Activated CD8-positive, alpha-beta T cell treated with anti-CD3 and anti-CD28 coated beads for 36 hours (primary cell): ENCODE measurements at regions of chr6 and their contacts with region 1.

Region 1: DNA sequence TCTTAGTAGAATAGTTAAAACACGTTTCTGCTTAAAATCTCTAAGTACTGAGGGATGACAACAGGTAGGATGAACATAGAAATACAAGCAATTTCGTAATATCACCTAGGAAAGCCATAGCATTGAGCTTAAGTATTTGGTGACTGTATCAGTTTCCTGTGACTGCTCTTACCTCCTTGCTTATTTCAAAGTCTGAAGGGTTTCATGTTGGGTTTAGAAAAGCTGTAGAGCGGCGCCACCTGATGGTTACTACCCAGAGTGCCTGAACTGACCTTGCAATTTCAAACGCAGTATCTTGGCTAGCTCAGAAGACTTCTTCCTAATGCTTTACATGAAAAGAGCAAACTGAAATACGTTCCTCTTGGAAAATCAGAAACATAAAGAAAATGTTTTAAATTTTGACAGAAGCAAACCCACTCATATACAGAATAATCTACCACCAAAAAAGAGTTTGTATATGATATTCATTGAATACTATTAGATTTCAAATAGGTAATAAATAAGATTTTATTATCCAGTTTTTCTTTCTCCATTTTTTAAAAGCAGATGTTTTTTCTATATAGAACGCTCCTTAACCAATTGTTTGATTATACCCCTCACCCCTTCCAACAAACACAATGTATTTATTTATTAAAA is 82.3 kb upstream of the RIPOR2 start:
- DNase-seq: peak; percentile 94
- ATAC-seq: peak; percentile 80
- H3K4me3 Mint-ChIP-seq: peak overlapping the region; percentile 11
- H3K27ac Mint-ChIP-seq: peak overlapping the region; percentile 76
- H3K4me1 Mint-ChIP-seq: peaks cover 51% of the 10 kb centered on the region
- H3K27me3 Mint-ChIP-seq: no peaks in the 10 kb centered on the region
- CTCF ChIP-seq: peak; percentile 84

Region 2: DNA sequence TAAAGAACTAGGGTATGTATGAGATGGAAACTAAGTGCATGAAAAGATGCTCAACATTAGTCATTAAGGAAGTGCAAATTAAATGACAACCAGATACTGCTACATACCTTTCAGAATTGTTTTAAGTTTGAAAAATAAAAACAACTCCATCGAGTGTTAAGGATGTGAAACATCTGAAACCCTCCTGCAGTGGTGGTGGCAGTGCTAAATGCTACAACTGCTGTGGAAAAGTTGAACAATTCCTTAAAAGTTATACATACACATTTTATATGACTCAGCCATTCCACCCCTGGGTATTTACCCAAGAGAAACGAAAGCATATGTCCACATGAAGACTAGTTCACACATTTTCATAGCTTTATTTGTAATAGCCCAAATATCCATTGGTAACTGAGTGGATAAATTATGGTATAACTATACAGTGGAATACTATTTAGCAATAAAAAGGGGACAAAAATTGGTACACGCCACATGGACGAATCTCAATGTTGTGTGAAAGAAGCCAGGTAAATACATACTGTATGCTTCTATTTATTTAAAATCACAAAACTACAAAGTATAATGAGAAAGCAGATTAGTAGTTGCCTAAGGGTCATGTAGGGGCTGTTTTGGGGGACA is 229.9 kb before region 1 on chr6:
- CTCF ChIA-PET with region 1: interaction called, 10 read pairs
- POLR2A ChIA-PET with region 1: interaction called, 3 read pairs
- intact Hi-C with region 1: no loop called
- DNase-seq: peak; percentile 33
- ATAC-seq: peak; percentile 79
- H3K4me3 Mint-ChIP-seq: no peak overlapping the region
- H3K27ac Mint-ChIP-seq: peak overlapping the region; percentile 47
- H3K4me1 Mint-ChIP-seq: peaks cover 19% of the 10 kb centered on the region
- H3K27me3 Mint-ChIP-seq: no peaks in the 10 kb centered on the region
- CTCF ChIP-seq: no peak

Region 3: DNA sequence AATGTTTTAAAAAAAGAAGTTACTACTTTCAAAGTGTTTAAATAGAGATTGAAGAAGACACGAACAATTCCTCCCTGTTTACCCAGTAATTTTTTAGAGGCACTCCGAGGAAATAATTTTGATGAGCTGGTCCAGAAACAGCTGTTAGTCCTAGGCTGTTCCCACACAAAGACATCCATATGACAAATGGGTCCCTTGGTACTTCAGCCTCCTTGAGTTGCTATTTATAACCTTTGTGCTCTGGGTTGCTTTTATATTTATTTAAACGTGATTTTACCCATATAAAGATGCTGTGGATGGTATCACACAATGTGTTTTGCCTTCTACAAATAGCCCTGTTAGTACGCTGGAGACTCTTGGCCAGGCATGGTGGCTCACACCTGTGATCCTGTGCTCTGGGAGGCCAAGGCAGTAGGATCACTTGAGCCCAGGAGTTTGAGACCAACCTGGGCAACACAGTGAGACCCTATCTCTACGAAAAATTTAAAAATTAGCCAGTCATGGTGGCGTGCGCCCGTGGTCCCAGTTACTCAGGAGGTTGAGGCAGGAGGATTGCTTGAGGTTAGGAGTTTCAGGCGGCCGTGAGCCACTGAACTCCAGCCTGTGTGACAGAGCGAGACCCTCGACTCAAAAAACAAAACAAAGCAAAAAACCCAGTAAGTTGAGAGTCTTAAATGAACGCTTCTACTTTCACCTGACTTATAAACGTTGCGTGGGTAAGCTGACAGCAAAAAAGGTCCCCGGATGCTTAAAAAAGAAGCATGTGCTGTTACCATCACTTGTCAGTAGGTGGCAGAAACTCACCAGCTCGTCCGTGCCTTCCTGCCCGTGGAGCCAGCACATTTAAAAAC is 162.4 kb before region 1 on chr6:
- CTCF ChIA-PET with region 1: interaction called, 156 read pairs
- POLR2A ChIA-PET with region 1: interaction called, 4 read pairs
- intact Hi-C with region 1: loop called (anchors 2 kb)
- DNase-seq: peak; percentile 83
- ATAC-seq: peak; percentile 68
- H3K4me3 Mint-ChIP-seq: peak overlapping the region; percentile 22
- H3K27ac Mint-ChIP-seq: peak overlapping the region; percentile 87
- H3K4me1 Mint-ChIP-seq: peaks cover 61% of the 10 kb centered on the region
- H3K27me3 Mint-ChIP-seq: no peaks in the 10 kb centered on the region
- CTCF ChIP-seq: peak; percentile 88

Region 4: DNA sequence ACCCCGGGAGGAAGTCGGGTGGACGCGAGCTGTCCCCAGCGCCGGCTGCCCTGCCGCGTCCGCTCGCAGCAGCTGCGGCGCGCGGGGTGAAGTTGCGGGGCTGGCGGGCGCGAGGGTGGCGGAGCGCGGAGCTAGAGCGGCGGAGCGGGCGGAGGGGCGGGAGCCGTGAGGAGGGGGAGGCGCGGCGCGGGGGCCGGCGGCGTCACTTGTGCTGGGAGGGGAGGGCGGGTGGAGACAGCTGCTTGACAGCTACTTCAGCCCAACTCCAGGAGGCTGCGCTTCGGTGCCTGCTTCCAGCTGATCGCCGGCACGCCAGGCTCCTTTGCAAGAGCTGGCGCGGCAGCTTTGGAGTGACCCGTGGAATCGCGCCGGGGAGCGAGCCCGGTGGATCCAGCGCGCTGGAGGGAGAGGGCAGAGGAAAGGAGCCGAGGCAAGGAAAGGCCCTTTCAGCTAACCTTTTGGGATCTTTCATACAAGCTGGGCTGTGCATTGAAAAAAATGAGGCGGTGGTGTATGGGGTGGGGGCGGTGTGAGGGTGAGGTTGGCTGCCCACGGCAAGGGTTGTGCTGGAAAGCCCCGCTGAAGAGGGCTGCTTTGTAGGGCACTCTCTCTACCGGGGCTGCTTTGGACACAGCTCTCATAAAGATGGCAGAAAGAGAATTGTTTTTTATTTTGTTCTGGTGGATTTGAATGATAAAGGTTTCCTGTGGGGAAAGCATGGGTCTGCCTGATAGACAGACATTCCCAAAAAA is 106.9 kb before region 1 on chr6:
- CTCF ChIA-PET with region 1: interaction called, 43 read pairs
- POLR2A ChIA-PET with region 1: no interaction called
- intact Hi-C with region 1: no loop called
- DNase-seq: peak; percentile 64
- ATAC-seq: peak; percentile 18
- H3K4me3 Mint-ChIP-seq: peak overlapping the region; percentile 97
- H3K27ac Mint-ChIP-seq: peak overlapping the region; percentile 96
- H3K4me1 Mint-ChIP-seq: peaks cover 73% of the 10 kb centered on the region
- H3K27me3 Mint-ChIP-seq: no peaks in the 10 kb centered on the region
- CTCF ChIP-seq: no peak

Region 5: GRCh38 chr6:25042036-25042521 is 24.0 kb after region 1 on chr6:
- CTCF ChIA-PET with region 1: interaction called, 12 read pairs
- POLR2A ChIA-PET with region 1: no interaction called
- intact Hi-C with region 1: no loop called
- DNase-seq: peak; percentile 64
- ATAC-seq: peak; percentile 64
- H3K4me3 Mint-ChIP-seq: peak overlapping the region; percentile 83
- H3K27ac Mint-ChIP-seq: peak overlapping the region; percentile 92
- H3K4me1 Mint-ChIP-seq: peaks cover 52% of the 10 kb centered on the region
- H3K27me3 Mint-ChIP-seq: no peaks in the 10 kb centered on the region
- CTCF ChIP-seq: no peak

Region 6: DNA sequence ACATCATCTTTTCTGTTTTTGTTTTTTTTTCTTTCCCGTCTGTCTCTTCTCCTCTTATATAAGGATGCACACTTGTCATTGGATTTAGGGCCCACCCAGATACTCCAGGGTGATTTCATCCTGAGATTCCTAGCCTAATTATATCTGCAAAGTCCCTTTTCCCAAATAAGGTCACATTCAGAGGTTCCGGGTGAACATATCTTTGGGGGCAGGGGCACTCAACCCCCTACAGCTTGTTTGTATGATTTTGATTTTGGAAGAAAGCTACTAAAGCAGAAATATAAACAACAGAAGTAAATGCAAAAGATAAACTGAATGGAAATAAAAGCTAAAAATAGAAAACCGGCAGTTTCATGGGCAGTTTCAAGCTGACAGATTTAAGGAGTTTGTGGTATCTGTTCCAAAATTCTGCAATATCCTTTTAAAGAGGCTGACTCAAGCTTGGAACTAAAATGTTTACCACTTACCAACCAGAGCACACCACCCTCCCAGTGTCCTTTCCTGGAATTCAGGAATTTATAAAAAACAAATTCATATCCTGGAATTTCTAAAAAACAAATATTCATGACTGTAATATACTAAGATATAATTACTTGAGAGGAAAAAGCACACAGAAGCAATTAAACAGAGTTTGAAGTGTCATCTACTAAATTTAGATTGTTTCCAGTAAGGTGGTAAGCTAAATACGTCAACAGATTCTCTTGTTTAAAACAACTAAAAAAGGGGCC is 161.2 kb after region 1 on chr6:
- CTCF ChIA-PET with region 1: no interaction called
- POLR2A ChIA-PET with region 1: no interaction called
- intact Hi-C with region 1: no loop called
- DNase-seq: no peak
- ATAC-seq: no peak
- H3K4me3 Mint-ChIP-seq: no peak overlapping the region
- H3K27ac Mint-ChIP-seq: peak overlapping the region; percentile 36
- H3K4me1 Mint-ChIP-seq: peaks cover 27% of the 10 kb centered on the region
- H3K27me3 Mint-ChIP-seq: peaks cover 4% of the 10 kb centered on the region
- CTCF ChIP-seq: no peak